Activated CD4-positive, alpha-beta memory T cell treated with anti-CD3 and anti-CD28 coated beads for 36 hours (primary cell): ENCODE measurements at regions of chr10 and their contacts with region 1.

Region 1: GRCh38 chr10:72215652-72216549 is at the starts of genes ANAPC16 and ASCC1:
- DNase-seq: peak; percentile 96
- H3K4me3 Mint-ChIP-seq: peak within 1 kb of the TSS; percentile 95
- H3K27ac Mint-ChIP-seq: peak within 1 kb of the TSS; percentile 98
- H3K4me1 Mint-ChIP-seq: peaks cover 53% of the 10 kb centered on the region
- H3K27me3 Mint-ChIP-seq: no peaks in the 10 kb centered on the region
- total RNA-seq, gene ANAPC16: 119 to 122 TPM
- total RNA-seq, gene ASCC1: 50.9 to 52.5 TPM

Region 2: GRCh38 chr10:71963756-71964668 is 251.9 kb before region 1 on chr10 and contains the start of gene CHST3:
- CTCF ChIA-PET with region 1: no interaction called
- POLR2A ChIA-PET with region 1: no interaction called
- intact Hi-C with region 1: no loop called
- DNase-seq: no peak
- H3K4me3 Mint-ChIP-seq: peak within 1 kb of the TSS; percentile 66
- H3K27ac Mint-ChIP-seq: no peak within 1 kb of the TSS
- H3K4me1 Mint-ChIP-seq: peaks cover 9% of the 10 kb centered on the region
- H3K27me3 Mint-ChIP-seq: peaks cover 54% of the 10 kb centered on the region
- total RNA-seq, gene CHST3: 0.19 to 0.31 TPM

Region 3: DNA sequence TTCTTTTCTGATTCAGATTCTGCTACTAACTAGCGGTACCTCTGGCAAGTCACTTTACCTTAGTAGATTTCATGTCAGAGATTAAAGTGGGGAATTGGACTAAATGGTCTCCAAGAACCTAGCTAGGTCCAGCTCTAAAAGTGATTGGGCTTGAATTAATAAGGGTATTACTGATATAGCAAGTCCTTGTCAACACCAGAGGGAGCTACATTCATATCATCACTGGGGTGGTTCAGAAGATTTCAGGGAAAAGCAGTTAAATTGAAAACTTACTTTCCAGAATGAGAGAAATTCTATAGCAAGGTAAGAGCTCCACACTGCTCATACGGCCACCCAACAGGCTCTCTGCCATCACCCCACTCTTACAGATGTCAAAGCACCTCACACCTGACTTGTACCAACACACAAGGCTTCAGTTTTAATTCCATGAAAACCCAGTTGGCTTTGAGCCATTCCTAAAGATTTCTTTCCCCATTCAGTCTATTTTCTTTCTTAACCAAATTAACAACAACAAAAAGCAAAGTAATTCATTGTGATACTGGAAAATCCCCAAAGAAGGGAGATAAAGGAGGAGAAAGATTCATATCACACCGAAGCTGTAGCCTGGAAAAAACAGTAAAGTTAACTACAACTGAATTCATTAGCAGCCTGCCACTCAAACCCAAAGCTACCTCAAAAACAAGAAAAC is 89.6 kb before region 1 on chr10:
- CTCF ChIA-PET with region 1: interaction called, 37 read pairs
- POLR2A ChIA-PET with region 1: no interaction called
- intact Hi-C with region 1: no loop called
- DNase-seq: no peak
- H3K4me3 Mint-ChIP-seq: no peak overlapping the region
- H3K27ac Mint-ChIP-seq: peak overlapping the region; percentile 6
- H3K4me1 Mint-ChIP-seq: peaks cover 34% of the 10 kb centered on the region
- H3K27me3 Mint-ChIP-seq: no peaks in the 10 kb centered on the region

Region 4: GRCh38 chr10:72248468-72249151 is 32.7 kb after region 1 on chr10:
- CTCF ChIA-PET with region 1: no interaction called
- POLR2A ChIA-PET with region 1: no interaction called
- intact Hi-C with region 1: loop called (anchors 2 kb)
- DNase-seq: peak; percentile 84
- H3K4me3 Mint-ChIP-seq: peak overlapping the region; percentile 83
- H3K27ac Mint-ChIP-seq: peak overlapping the region; percentile 98
- H3K4me1 Mint-ChIP-seq: peaks cover 74% of the 10 kb centered on the region
- H3K27me3 Mint-ChIP-seq: no peaks in the 10 kb centered on the region

Region 5: GRCh38 chr10:72273410-72274212 is 57.7 kb after region 1 on chr10 and contains the start of gene DDIT4:
- CTCF ChIA-PET with region 1: interaction called, 4 read pairs
- POLR2A ChIA-PET with region 1: interaction called, 31 read pairs
- intact Hi-C with region 1: loop called (anchors 1 kb)
- DNase-seq: peak; percentile 99
- H3K4me3 Mint-ChIP-seq: peak within 1 kb of the TSS; percentile 99
- H3K27ac Mint-ChIP-seq: peak within 1 kb of the TSS; percentile 97
- H3K4me1 Mint-ChIP-seq: peaks cover 46% of the 10 kb centered on the region
- H3K27me3 Mint-ChIP-seq: peaks cover 5% of the 10 kb centered on the region
- total RNA-seq, gene DDIT4: 637 TPM